ENCODE measurements at regions of chr14 and their contacts with region 1.

Region 1: GRCh38 chr14:53539489-53540126 is 386.5 kb upstream of the DDHD1 start:
- DNase-seq: peak; percentile 94
- H3K4me3 ChIP-seq: no peak overlapping the region
- H3K27ac ChIP-seq: no peak overlapping the region
- H3K4me1 ChIP-seq: peaks cover 43% of the 10 kb centered on the region
- H3K27me3 ChIP-seq: no peaks in the 10 kb centered on the region
- CTCF ChIP-seq: peak; percentile 74 to 82
- POLR2A ChIP-seq: no peak

Region 2: GRCh38 chr14:53432378-53432802 is 107.2 kb before region 1 on chr14:
- CTCF ChIA-PET with region 1: interaction called, 14 read pairs
- POLR2A ChIA-PET with region 1: no interaction called
- dilution Hi-C with region 1: no loop called
- intact Hi-C with region 1: loop called (anchors 1 kb)
- DNase-seq: peak; percentile 70
- H3K4me3 ChIP-seq: no peak overlapping the region
- H3K27ac ChIP-seq: no peak overlapping the region
- H3K4me1 ChIP-seq: no peaks in the 10 kb centered on the region
- H3K27me3 ChIP-seq: peaks cover 6 to 14% of the 10 kb centered on the region in 2 experiments
- CTCF ChIP-seq: peak; percentile 64 to 68
- POLR2A ChIP-seq: no peak

Region 3: DNA sequence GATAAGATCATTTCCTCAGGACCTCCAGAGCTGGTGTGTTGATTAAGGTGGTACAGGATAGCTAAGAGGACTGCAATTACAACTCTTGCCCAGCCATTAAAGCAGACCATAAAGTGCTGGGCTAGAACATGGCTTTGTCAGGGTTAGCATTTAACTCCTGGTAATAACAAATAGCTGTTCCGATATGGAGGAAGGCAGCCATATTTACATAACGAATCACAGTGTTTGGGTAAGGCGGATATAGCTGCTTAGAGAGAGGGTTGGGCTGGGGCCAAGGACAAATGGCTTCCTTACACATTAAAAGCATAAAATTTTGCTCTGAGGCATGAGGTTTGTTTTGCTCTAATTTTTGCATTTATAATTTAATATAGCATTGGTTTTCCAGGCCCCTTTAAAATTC is 88.7 kb before region 1 on chr14:
- CTCF ChIA-PET with region 1: no interaction called
- POLR2A ChIA-PET with region 1: no interaction called
- dilution Hi-C with region 1: no loop called
- intact Hi-C with region 1: no loop called
- DNase-seq: peak; percentile 42
- H3K4me3 ChIP-seq: no peak overlapping the region
- H3K27ac ChIP-seq: no peak overlapping the region
- H3K4me1 ChIP-seq: peaks cover 3% of the 10 kb centered on the region
- H3K27me3 ChIP-seq: no peaks in the 10 kb centered on the region
- CTCF ChIP-seq: no peak
- POLR2A ChIP-seq: no peak

Region 4: DNA sequence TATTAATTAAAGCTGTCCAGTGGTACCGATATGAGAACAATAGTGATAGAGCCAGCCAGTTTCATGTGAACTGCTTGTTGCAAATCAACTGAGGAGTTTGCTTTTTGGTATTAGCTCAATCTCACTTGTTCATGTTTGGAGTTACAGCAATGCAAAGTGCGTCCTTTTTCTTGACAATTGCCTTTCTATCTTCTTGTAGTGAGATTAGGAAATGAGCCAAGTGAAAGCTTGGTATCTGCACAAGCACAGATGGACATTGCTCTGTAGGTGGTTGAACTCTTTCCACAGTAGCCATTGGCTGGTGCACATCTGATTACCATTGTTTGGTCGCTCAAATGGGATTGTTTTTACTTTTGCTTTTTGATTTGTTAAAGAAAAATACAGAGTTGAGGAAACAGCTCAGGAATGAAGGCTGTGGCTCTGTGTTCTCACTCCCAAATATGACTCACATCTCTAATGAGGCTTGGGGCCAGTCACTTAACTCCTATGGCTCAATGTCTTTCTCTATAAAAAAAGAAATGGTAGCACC is 175.6 kb after region 1 on chr14:
- CTCF ChIA-PET with region 1: interaction called, 3 read pairs
- POLR2A ChIA-PET with region 1: no interaction called
- dilution Hi-C with region 1: no loop called
- intact Hi-C with region 1: loop called (anchors 2 kb)
- DNase-seq: peak; percentile 94
- H3K4me3 ChIP-seq: peak overlapping the region in 1 of 3 experiments; percentile 56
- H3K27ac ChIP-seq: peak overlapping the region; percentile 56
- H3K4me1 ChIP-seq: peaks cover 29% of the 10 kb centered on the region
- H3K27me3 ChIP-seq: no peaks in the 10 kb centered on the region
- CTCF ChIP-seq: no peak
- POLR2A ChIP-seq: peak; percentile 31

Region 5: GRCh38 chr14:54001189-54001913 is 461.7 kb after region 1 on chr14:
- CTCF ChIA-PET with region 1: interaction called, 3 read pairs
- POLR2A ChIA-PET with region 1: no interaction called
- dilution Hi-C with region 1: no loop called
- intact Hi-C with region 1: loop called (anchors 1 kb)
- DNase-seq: peak; percentile 34
- H3K4me3 ChIP-seq: no peak overlapping the region
- H3K27ac ChIP-seq: peak overlapping the region; percentile 69
- H3K4me1 ChIP-seq: peaks cover 20% of the 10 kb centered on the region
- H3K27me3 ChIP-seq: no peaks in the 10 kb centered on the region
- CTCF ChIP-seq: peak in 1 of 2 donors; percentile 10
- POLR2A ChIP-seq: no peak

Region 6: DNA sequence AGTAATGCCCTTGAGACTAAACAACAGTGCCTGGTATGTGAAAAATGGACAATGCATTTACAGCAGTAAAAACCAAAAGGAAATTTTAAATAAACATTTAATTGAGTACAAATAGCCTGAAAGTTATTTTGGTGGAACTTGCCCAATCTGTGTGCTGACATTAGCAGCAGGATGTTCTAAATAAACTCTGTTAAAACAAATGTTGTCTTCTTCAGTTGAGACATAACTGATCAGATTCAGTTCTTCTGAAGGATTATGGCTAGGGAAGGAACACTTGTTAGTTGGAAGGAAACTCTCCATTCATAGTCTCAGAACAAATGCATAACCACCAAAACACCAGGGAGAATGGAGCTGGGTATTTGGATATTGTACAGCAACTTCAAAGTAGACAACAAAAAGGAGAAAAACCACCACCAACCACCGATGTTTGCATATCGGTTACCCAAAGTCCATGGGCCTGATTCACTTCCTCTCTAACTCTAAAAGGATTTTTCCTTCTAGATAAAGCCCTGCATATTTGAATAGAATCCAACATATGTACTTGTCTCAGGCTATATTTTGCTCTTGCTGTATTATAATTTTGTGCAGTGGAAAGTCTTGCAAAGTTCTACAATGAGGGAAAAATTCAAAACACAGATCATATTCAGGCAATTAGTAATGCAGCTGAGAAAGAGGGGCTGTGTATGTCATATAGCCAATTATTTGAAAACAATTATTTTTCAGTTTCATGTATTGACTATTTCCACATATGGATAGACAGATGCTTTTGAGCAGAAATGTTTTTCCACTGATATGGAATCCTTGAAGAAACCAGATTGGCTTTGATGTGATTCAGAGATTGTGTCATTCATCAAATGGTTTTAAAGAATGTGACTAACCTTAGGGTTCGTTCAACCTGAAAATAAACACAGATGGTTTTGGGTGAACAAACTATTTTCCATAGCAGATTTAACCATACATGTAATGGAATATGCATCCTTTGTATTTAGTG is 569.2 kb after region 1 on chr14:
- CTCF ChIA-PET with region 1: interaction called, 3 read pairs
- POLR2A ChIA-PET with region 1: no interaction called
- dilution Hi-C with region 1: no loop called
- intact Hi-C with region 1: loop called (anchors 1 kb)
- DNase-seq: peak; percentile 94
- H3K4me3 ChIP-seq: peak overlapping the region in 1 of 3 experiments; percentile 17
- H3K27ac ChIP-seq: peak overlapping the region; percentile 96
- H3K4me1 ChIP-seq: peaks cover 44% of the 10 kb centered on the region
- H3K27me3 ChIP-seq: no peaks in the 10 kb centered on the region
- CTCF ChIP-seq: no peak
- POLR2A ChIP-seq: no peak